ENCODE measurements at regions of chr14 and their contacts with region 1.

Region 1: DNA sequence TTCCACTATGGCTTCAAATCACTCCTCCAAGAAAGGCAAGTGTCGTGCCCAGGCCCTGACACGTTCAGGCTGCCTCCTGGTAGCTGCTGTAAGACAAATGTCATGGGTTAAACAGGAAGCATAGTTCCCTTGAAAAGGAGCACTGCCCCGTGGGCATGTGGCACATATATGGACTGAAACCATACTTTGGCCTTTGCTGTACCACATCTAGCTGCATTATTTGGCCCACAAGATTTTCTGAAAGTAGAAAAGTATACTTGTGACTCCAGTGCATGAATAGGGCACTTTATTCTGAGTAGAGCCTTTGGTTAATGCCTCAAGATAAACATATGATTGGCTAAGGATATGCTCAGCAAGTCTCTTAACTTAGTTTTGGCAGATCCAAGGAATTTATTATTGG is 218.7 kb upstream of the EGLN3 start:
- DNase-seq: no peak
- H3K4me3 ChIP-seq: no peak overlapping the region
- H3K27ac ChIP-seq: no peak overlapping the region
- H3K4me1 ChIP-seq: no peaks in the 10 kb centered on the region
- H3K27me3 ChIP-seq: no peaks in the 10 kb centered on the region
- CTCF ChIP-seq: no peak
- POLR2A ChIP-seq: no peak

Region 2: DNA sequence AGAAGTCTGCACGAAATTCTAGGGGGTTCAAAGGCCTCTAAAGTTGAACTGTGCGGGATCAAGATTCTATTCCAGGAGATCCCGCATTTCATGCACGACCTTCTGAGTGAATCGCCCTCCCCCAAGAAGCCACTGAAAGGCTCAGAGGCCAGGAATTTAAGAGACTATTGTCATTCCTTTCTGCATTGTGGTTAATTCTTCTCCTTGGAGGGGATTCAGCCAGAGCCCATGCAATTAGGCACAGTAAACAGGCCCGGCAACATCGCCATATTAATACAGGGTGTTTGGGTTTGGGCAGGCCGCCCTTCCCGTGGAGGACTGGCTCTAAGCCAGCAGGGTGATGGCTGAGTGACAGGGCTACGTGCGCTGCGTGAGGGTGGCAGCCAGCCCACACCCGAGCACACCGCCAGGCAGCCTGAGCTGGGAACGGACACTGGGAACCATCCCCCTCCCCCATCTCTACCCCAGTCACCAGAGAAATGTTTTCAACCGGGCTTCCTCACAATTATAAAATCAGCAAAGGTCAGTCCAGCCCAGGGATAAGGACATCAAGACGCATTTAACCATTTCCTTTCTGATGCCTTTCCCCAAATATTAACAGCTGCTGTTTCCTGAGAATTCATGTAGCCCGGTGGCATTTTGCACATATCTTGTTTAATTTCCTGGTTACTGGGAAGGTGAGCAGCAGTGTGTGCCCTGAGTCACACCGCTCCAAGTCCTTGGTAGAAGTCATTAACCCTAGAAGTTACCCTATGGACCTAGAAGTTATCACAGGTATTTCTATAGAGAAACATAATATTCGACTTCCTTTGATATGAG is 231.2 kb before region 1 on chr14:
- CTCF ChIA-PET with region 1: no interaction called
- POLR2A ChIA-PET with region 1: no interaction called
- dilution Hi-C with region 1: no loop called
- intact Hi-C with region 1: no loop called
- DNase-seq: no peak
- H3K4me3 ChIP-seq: no peak overlapping the region
- H3K27ac ChIP-seq: no peak overlapping the region
- H3K4me1 ChIP-seq: peaks cover 14% of the 10 kb centered on the region
- H3K27me3 ChIP-seq: no peaks in the 10 kb centered on the region
- CTCF ChIP-seq: no peak
- POLR2A ChIP-seq: no peak

Region 3: GRCh38 chr14:34220921-34221320 is 51.4 kb after region 1 on chr14:
- CTCF ChIA-PET with region 1: no interaction called
- POLR2A ChIA-PET with region 1: no interaction called
- dilution Hi-C with region 1: no loop called
- intact Hi-C with region 1: loop called (anchors 1 kb)
- DNase-seq: no peak
- H3K4me3 ChIP-seq: no peak overlapping the region
- H3K27ac ChIP-seq: no peak overlapping the region
- H3K4me1 ChIP-seq: no peaks in the 10 kb centered on the region
- H3K27me3 ChIP-seq: peaks cover 2 to 3% of the 10 kb centered on the region in 2 experiments
- CTCF ChIP-seq: no peak
- POLR2A ChIP-seq: no peak